Naive thymus-derived CD4-positive, alpha-beta T cell (primary cell): ENCODE measurements at regions of chr6 and their contacts with region 1.

Region 1: DNA sequence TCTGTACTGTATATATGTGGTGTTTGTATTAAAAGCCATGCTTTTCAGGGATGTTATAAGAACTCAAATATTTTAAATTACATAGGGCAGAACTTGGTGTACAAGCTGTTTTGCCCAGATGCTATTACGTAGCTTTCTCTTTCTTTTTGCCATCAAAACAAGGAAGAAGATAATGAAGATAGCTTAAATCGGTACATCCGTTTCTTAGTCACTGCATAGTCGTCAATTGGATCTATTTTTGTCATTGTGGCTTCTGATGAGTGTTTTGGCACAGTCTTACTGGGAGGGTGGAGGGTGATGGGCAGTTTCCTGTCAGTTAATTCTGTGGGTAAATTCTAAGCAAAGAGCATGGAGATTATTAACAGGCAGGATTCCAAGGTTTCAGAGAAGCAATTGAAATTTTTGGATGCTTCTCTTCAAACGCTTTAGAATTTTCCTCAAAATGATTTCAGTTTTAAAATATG is 649.1 kb upstream of the GJE1 start:
- DNase-seq: peak in 8 of 9 donors; percentile 32 to 85 (median 82)
- ATAC-seq: peak; percentile 98
- H3K4me3 ChIP-seq: peak overlapping the region; percentile 47
- H3K4me3 Mint-ChIP-seq: peak overlapping the region; percentile 74 to 93 (median 84)
- H3K27ac ChIP-seq: peak overlapping the region; percentile 68
- H3K27ac Mint-ChIP-seq: peak overlapping the region; percentile 81 to 97 (median 92)
- H3K4me1 ChIP-seq: peaks cover 11 to 24% of the 10 kb centered on the region in 2 donors
- H3K4me1 Mint-ChIP-seq: peaks cover 11 to 57% (median 41%) of the 10 kb centered on the region in 7 donors
- H3K27me3 ChIP-seq: no peaks in the 10 kb centered on the region
- H3K27me3 Mint-ChIP-seq: no peaks in the 10 kb centered on the region

Region 2: GRCh38 chr6:140586426-140587061 is 897.1 kb before region 1 on chr6:
- CTCF ChIA-PET with region 1: no interaction called
- POLR2A ChIA-PET with region 1: no interaction called
- intact Hi-C with region 1: loop called in 1 of 2 experiments (anchors 5 kb)
- DNase-seq: peak in 1 of 9 donors; percentile 35
- ATAC-seq: no peak
- H3K4me3 ChIP-seq: no peak overlapping the region
- H3K4me3 Mint-ChIP-seq: peak overlapping the region in 1 of 10 donors; percentile 53
- H3K27ac ChIP-seq: no peak overlapping the region
- H3K27ac Mint-ChIP-seq: peak overlapping the region in 2 of 9 donors; percentile 17 to 90
- H3K4me1 ChIP-seq: no peaks in the 10 kb centered on the region
- H3K4me1 Mint-ChIP-seq: peaks cover 0 to 47% (median 0%) of the 10 kb centered on the region in 7 donors
- H3K27me3 ChIP-seq: no peaks in the 10 kb centered on the region
- H3K27me3 Mint-ChIP-seq: peaks cover 0 to 5% (median 0%) of the 10 kb centered on the region in 5 donors

Region 3: DNA sequence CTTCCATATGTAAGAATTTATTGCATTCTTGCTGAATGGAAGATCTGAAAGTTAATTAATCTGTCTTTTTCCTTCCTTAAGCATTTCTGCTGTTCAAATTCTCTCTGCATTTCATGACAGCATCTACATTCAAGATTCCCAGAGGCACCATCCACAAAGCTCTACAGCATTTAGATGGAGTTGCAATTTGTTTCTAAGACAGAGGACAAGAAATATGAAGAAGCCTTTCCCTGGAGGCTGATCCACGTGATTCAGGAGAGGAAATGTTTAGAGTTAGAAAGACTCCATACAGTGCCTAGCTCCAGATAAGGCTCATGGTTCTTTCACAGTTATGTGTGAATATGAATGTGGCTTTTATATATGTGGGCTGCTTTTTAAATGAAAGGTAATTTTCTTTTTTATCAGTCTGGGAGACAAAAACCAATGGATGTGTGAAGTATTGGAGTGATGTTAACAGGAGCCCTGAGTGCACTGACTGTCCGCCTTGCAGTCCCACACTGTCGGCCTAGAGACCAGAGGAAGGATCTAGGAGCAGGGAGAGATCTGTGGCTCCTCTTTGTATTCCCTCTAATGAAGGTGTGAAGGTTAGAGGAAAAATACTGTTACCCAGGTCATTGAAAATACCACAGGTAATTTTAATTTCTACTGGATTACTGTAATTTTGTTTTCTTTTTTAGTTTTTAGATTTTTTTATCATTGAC is 37.6 kb before region 1 on chr6:
- CTCF ChIA-PET with region 1: no interaction called
- POLR2A ChIA-PET with region 1: no interaction called
- intact Hi-C with region 1: loop called in 1 of 2 experiments (anchors 5 kb)
- DNase-seq: no peak
- ATAC-seq: no peak
- H3K4me3 ChIP-seq: no peak overlapping the region
- H3K4me3 Mint-ChIP-seq: no peak overlapping the region
- H3K27ac ChIP-seq: no peak overlapping the region
- H3K27ac Mint-ChIP-seq: no peak overlapping the region
- H3K4me1 ChIP-seq: no peaks in the 10 kb centered on the region
- H3K4me1 Mint-ChIP-seq: peaks cover 0 to 4% (median 0%) of the 10 kb centered on the region in 7 donors
- H3K27me3 ChIP-seq: no peaks in the 10 kb centered on the region
- H3K27me3 Mint-ChIP-seq: peaks cover 0 to 5% (median 0%) of the 10 kb centered on the region in 5 donors

Region 4: GRCh38 chr6:141470810-141471209 is 12.8 kb before region 1 on chr6:
- CTCF ChIA-PET with region 1: interaction called, 3 read pairs
- POLR2A ChIA-PET with region 1: no interaction called
- intact Hi-C with region 1: loop called in 1 of 2 experiments (anchors 1 kb)
- DNase-seq: no peak
- ATAC-seq: no peak
- H3K4me3 ChIP-seq: no peak overlapping the region
- H3K4me3 Mint-ChIP-seq: peak overlapping the region in 1 of 10 donors; percentile 37
- H3K27ac ChIP-seq: no peak overlapping the region
- H3K27ac Mint-ChIP-seq: peak overlapping the region in 3 of 9 donors; percentile 7 to 80 (median 69)
- H3K4me1 ChIP-seq: no peaks in the 10 kb centered on the region
- H3K4me1 Mint-ChIP-seq: peaks cover 0 to 11% (median 0%) of the 10 kb centered on the region in 7 donors
- H3K27me3 ChIP-seq: no peaks in the 10 kb centered on the region
- H3K27me3 Mint-ChIP-seq: no peaks in the 10 kb centered on the region

Region 5: GRCh38 chr6:141551318-141551717 is 67.7 kb after region 1 on chr6:
- CTCF ChIA-PET with region 1: no interaction called
- POLR2A ChIA-PET with region 1: no interaction called
- intact Hi-C with region 1: loop called in 1 of 2 experiments (anchors 2 kb)
- DNase-seq: no peak
- ATAC-seq: no peak
- H3K4me3 ChIP-seq: no peak overlapping the region
- H3K4me3 Mint-ChIP-seq: no peak overlapping the region
- H3K27ac ChIP-seq: no peak overlapping the region
- H3K27ac Mint-ChIP-seq: no peak overlapping the region
- H3K4me1 ChIP-seq: no peaks in the 10 kb centered on the region
- H3K4me1 Mint-ChIP-seq: peaks cover 0 to 5% (median 0%) of the 10 kb centered on the region in 7 donors
- H3K27me3 ChIP-seq: no peaks in the 10 kb centered on the region
- H3K27me3 Mint-ChIP-seq: peaks cover 0 to 21% (median 0%) of the 10 kb centered on the region in 5 donors